Activated CD4-positive, alpha-beta memory T cell treated with anti-CD3 and anti-CD28 coated beads, Interleukin-2, amount 10 ng/mL, durations not matched to agents 7 days and 5 days (primary cell): ENCODE measurements at regions of chr15 and their contacts with region 1.

Region 1: GRCh38 chr15:74787251-74788041 is 5.6 kb downstream of the CSK start:
- DNase-seq: peak; percentile 95
- H3K4me3 Mint-ChIP-seq: peak overlapping the region; percentile 85
- H3K27ac Mint-ChIP-seq: peak overlapping the region; percentile 97
- H3K4me1 Mint-ChIP-seq: peaks cover 62% of the 10 kb centered on the region
- H3K27me3 Mint-ChIP-seq: no peaks in the 10 kb centered on the region

Region 2: GRCh38 chr15:74799856-74800547 is 12.6 kb after region 1 on chr15:
- CTCF ChIA-PET with region 1: interaction called, 1,235 read pairs
- POLR2A ChIA-PET with region 1: interaction called, 1,214 read pairs
- DNase-seq: peak; percentile 89
- H3K4me3 Mint-ChIP-seq: no peak overlapping the region
- H3K27ac Mint-ChIP-seq: peak overlapping the region; percentile 73
- H3K4me1 Mint-ChIP-seq: peaks cover 56% of the 10 kb centered on the region
- H3K27me3 Mint-ChIP-seq: no peaks in the 10 kb centered on the region

Region 3: DNA sequence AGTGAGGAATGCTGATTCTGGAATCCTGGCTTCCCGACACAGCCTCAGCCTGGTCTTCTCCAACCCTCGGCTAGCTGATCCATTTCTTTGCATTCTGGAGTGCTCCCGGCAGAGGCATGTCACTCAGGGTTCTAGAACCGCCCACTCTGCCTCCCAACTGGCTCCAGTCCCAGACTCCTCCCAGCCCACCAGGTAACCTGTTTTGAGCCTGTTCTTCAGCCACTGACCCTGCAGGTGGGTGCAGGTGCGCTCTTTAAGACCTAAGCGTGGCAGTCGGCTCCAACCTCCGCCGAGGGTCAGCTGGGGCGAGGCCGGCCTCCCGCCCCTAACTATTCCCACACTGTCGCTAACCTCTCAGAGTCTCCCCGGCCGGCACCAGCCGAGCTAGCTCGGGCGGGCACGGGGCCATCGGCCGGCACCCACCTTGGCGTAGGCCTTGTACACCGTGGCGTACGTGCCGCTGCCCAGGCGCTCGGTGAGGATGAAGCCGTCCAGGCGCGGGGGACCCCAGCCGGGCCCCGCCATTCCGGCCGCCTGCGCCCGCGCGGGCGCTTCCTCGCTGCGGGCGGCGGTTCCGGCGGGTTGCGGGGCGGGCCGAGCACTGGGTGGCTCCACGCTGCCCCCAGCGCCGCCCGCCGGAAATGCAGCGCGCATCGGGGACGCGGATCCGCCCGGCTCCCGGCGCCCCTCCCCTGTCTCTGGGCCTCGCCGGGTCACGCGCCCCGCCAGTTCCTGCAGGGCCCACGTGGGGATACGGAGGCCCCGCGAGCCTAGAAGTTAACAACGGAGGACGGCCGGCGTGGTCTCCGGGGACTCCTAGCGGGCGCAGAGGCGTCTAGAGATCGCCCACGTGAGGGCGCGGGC is 55.4 kb after region 1 on chr15 and contains the start of gene ULK3:
- CTCF ChIA-PET with region 1: interaction called, 22 read pairs
- POLR2A ChIA-PET with region 1: interaction called, 14 read pairs
- DNase-seq: peak; percentile 95
- H3K4me3 Mint-ChIP-seq: peak within 1 kb of the TSS; percentile 91
- H3K27ac Mint-ChIP-seq: peak within 1 kb of the TSS; percentile 98
- H3K4me1 Mint-ChIP-seq: peaks cover 63% of the 10 kb centered on the region
- H3K27me3 Mint-ChIP-seq: no peaks in the 10 kb centered on the region
- total RNA-seq, gene ULK3: 74.9 to 84.2 TPM

Region 4: GRCh38 chr15:74937596-74938296 is 150.3 kb after region 1 on chr15 and contains the start of gene COX5A:
- CTCF ChIA-PET with region 1: interaction called, 7 read pairs
- POLR2A ChIA-PET with region 1: interaction called, 13 read pairs
- DNase-seq: peak; percentile 94
- H3K4me3 Mint-ChIP-seq: peak within 1 kb of the TSS; percentile 91
- H3K27ac Mint-ChIP-seq: peak within 1 kb of the TSS; percentile 87
- H3K4me1 Mint-ChIP-seq: peaks cover 42% of the 10 kb centered on the region
- H3K27me3 Mint-ChIP-seq: no peaks in the 10 kb centered on the region
- total RNA-seq, gene COX5A: 273 to 274 TPM

Region 5: GRCh38 chr15:74950078-74951000 is 162.9 kb after region 1 on chr15:
- CTCF ChIA-PET with region 1: interaction called, 16 read pairs
- POLR2A ChIA-PET with region 1: interaction called, 6 read pairs
- DNase-seq: peak; percentile 83
- H3K4me3 Mint-ChIP-seq: no peak overlapping the region
- H3K27ac Mint-ChIP-seq: no peak overlapping the region
- H3K4me1 Mint-ChIP-seq: peaks cover 15% of the 10 kb centered on the region
- H3K27me3 Mint-ChIP-seq: peaks cover 1% of the 10 kb centered on the region